GM10248 (cell line): ENCODE measurements at regions of chr7 and their contacts with region 1.

Region 1: GRCh38 chr7:142478479-142479072 is 220.7 kb upstream of the PRSS58 start:
- DNase-seq: peak; percentile 31
- CTCF ChIP-seq: peak; percentile 68

Region 2: DNA sequence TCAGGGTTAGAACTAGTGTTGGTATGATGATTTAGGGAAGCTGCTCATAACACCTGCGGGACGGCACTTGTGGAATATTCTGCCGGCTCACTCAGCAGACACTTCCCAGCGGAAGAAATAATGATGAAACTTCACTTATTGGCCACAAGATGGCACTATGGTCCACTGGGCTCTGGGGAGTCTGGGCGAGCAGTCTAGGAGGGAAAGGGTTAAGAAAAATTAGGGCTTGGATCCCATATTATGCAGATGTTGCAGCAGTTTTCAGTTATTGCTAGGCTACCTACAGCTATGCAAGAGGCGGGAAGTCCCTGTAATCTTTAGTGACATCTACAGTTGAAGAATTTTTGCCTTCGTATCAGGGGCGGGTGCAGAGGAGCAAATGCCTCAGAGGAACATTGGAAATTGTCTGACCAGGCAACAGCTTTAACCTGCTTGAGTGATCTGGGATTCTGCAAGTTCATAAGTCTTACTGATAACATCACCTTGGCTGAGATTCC is 18.0 kb after region 1 on chr7:
- CTCF ChIA-PET with region 1: interaction called, 158 read pairs
- POLR2A ChIA-PET with region 1: no interaction called
- DNase-seq: peak; percentile 34
- CTCF ChIP-seq: peak; percentile 73

Region 3: DNA sequence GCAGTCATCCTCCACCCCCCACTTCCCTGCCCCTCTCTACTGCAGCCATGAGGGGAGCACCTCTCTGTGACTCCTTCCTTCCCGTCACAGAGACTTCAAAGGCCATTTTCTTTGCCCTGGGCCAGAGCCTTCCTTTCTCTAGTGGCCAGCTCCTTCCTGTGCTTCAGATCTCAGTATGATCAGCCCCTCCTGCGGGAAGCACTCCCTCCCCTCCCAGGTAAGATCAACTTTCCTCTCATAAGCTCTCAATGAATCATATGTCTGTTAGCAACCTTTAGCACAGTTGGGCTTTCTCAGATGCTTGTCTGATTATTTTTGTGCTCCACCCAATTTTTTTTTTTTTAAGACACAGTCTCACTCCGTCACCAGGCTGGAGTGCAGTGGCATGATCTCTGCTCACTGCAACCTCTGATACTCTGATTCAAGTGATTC is 29.7 kb after region 1 on chr7:
- CTCF ChIA-PET with region 1: interaction called, 12 read pairs
- POLR2A ChIA-PET with region 1: no interaction called
- DNase-seq: no peak
- CTCF ChIP-seq: no peak

Region 4: DNA sequence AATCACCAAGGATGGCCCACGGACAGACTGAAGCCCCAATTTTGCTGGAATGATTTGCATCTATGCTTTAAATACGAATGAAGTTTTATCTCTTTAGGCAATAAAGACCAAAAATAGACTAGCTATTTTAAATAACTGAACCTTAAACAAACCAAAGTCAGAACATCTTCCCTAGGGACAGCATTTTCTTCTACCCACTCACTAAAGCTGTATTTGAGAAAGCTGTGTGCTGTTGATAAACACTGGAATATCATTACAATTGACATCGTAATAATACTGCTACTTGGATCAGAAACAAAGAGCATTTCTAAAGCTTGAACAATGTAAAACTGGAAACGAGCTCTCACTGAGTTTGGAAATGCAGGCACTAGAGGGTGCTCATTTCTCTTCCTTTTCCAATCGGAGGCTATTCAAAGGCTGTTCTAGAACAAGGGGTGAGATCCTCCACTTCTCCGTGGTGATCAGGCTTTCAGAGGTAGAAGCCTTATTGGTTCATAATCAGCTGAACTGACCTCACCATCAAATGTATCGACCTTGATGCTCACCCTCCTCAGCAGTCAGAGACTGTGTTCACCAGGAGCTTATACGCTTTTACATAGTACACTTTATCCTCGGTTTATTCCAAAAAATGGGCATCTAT is 45.4 kb after region 1 on chr7:
- CTCF ChIA-PET with region 1: interaction called, 11 read pairs
- POLR2A ChIA-PET with region 1: no interaction called
- DNase-seq: no peak
- CTCF ChIP-seq: no peak